Esophagus squamous epithelium (tissue), 5 donors: ENCODE measurements at regions of chr1 and their contacts with region 1.

Region 1: GRCh38 chr1:111789666-111790316 is 34.1 kb downstream of the DDX20 start:
- DNase-seq: no peak
- H3K4me3 ChIP-seq: no peak overlapping the region
- H3K27ac ChIP-seq: peak overlapping the region in 2 of 4 donors; percentile 42 to 59
- H3K4me1 ChIP-seq: peaks cover 0 to 8% (median 0%) of the 10 kb centered on the region in 3 donors
- H3K27me3 ChIP-seq: peaks cover 0 to 5% (median 0%) of the 10 kb centered on the region in 4 donors
- CTCF ChIP-seq: peak in 3 of 6 experiments; percentile 20 to 31 (median 25)
- POLR2A ChIP-seq: no peak

Region 2: DNA sequence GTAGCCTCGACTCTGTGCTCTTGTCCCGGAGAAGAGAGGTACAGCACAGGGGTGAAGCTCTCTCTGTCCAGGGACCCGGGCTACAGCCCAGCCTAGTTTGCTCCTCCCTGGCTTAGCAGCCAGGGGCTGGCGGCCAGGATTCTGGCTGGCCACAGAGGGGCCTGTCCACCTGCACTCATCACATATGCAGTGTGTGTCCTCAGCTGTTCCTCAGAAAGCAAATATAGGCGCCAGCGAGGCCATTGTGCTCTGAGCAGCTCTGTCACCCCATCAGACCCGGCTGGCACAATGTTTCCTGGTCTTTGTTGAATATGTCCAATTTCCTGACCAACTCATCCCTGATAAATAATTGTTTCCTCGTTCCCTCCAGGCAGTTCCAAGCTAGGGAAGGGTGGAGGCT is 171.2 kb after region 1 on chr1:
- intact Hi-C with region 1: loop called (anchors 10 kb)
- DNase-seq: no peak
- H3K4me3 ChIP-seq: no peak overlapping the region
- H3K27ac ChIP-seq: no peak overlapping the region
- H3K4me1 ChIP-seq: peaks cover 0 to 13% (median 0%) of the 10 kb centered on the region in 3 donors
- H3K27me3 ChIP-seq: peaks cover 0 to 4% (median 0%) of the 10 kb centered on the region in 4 donors
- CTCF ChIP-seq: no peak
- POLR2A ChIP-seq: no peak

Region 3: GRCh38 chr1:111990878-111991718 is 201.3 kb after region 1 on chr1:
- intact Hi-C with region 1: loop called (anchors 10 kb)
- DNase-seq: no peak
- H3K4me3 ChIP-seq: peak overlapping the region; percentile 54 to 82 (median 64)
- H3K27ac ChIP-seq: peak overlapping the region; percentile 48 to 83 (median 68)
- H3K4me1 ChIP-seq: peaks cover 16 to 36% (median 21%) of the 10 kb centered on the region in 3 donors
- H3K27me3 ChIP-seq: peaks cover 0 to 66% (median 0%) of the 10 kb centered on the region in 4 donors
- CTCF ChIP-seq: peak in 4 of 6 experiments; percentile 33 to 45 (median 44)
- POLR2A ChIP-seq: no peak